HAP-1 (cell line): ENCODE measurements at regions of chr12 and their contacts with region 1.

Region 1: GRCh38 chr12:54368709-54369583 is 4.7 kb upstream of the GPR84 start:
- DNase-seq: peak; percentile 73 to 94
- H3K4me3 ChIP-seq: no peak overlapping the region
- H3K4me1 ChIP-seq: peaks cover 3% of the 10 kb centered on the region
- H3K27me3 ChIP-seq: no peaks in the 10 kb centered on the region

Region 2: DNA sequence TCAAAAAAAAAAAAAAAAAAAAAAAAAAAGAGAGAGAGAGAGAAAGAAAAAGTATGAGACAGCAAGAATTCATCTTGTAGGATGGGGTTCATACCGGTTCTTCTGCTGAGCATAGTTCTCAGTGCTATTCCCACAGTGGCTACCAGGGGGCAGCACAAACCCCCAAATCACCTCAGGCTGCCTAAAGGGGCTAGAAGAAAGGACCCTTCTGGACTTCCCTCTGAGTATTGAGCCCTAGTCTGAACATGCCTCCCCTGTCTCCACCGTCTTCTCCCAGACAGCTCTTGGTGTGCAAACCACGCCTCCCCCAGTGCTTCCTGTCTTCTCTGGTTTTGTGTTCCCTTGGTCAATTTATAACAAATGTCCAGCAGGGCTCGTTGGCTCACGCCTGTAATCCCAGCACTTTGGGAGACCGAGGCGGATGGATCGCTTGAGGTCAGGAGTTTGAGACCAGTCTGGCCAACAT is 148.8 kb before region 1 on chr12:
- in situ Hi-C with region 1: loop called (anchors 5 kb)
- DNase-seq: peak; percentile 51 to 83
- H3K4me3 ChIP-seq: no peak overlapping the region
- H3K4me1 ChIP-seq: peaks cover 3% of the 10 kb centered on the region
- H3K27me3 ChIP-seq: no peaks in the 10 kb centered on the region

Region 3: GRCh38 chr12:54299515-54300261 is 69.3 kb before region 1 on chr12:
- in situ Hi-C with region 1: loop called (anchors 5 kb)
- DNase-seq: no peak
- H3K4me3 ChIP-seq: no peak overlapping the region
- H3K4me1 ChIP-seq: peaks cover 4% of the 10 kb centered on the region; the same call in 1 of the 2 replicates
- H3K27me3 ChIP-seq: peaks cover 41% of the 10 kb centered on the region